Activated CD8-positive, alpha-beta T cell treated with anti-CD3 and anti-CD28 coated beads for 36 hours (primary cell): ENCODE measurements at regions of chr19 and their contacts with region 1.

Region 1: GRCh38 chr19:17739121-17739875 is 12.0 kb upstream of the FCHO1 start:
- DNase-seq: no peak
- ATAC-seq: no peak
- H3K4me3 Mint-ChIP-seq: no peak overlapping the region
- H3K27ac Mint-ChIP-seq: no peak overlapping the region
- H3K4me1 Mint-ChIP-seq: peaks cover 10% of the 10 kb centered on the region
- H3K27me3 Mint-ChIP-seq: no peaks in the 10 kb centered on the region
- CTCF ChIP-seq: no peak

Region 2: DNA sequence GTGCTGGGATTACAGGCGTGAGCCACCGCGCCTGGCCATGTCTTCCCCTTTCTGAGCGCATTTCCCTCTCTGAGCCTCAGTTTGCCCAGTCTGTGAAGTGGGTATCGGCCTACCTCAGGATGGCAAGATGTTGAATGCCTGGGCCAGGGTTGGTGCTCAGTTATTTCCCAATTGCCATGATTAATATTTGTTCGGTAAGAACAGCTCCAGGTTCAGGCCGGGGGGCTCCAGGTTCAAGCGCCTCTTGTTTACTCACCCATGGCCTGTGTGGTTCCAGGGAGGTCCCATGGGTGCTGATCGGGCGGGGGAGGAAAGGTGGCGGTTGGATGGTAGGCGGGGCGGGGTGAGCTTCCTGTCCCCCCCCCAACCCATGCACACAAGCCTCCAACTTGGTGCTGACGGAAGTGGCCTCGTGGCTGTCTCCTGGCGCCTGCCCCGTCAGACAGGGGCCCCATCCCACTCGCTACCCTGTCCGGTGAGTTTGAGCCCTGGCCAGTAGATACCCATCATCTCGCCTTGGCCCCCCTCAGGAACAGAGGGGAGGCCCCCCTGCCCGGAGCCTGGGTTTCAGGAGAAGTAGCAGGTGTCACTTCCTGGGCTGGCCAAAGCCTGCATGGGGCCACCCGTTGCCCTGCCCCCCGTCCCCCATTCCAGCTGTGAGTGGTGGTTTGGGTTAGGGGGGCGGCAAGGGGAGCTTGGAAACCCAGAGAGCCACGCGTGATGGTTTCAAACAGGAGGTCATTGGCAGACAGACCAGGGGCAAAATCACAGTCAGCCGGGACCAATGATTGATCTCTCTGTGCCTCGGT is 12.0 kb after region 1 on chr19 and contains the start of gene FCHO1:
- CTCF ChIA-PET with region 1: interaction called, 4 read pairs
- POLR2A ChIA-PET with region 1: interaction called, 32 read pairs
- intact Hi-C with region 1: no loop called
- DNase-seq: peak; percentile 95
- ATAC-seq: peak; percentile 68
- H3K4me3 Mint-ChIP-seq: peak within 1 kb of the TSS; percentile 80
- H3K27ac Mint-ChIP-seq: peak within 1 kb of the TSS; percentile 92
- H3K4me1 Mint-ChIP-seq: peaks cover 58% of the 10 kb centered on the region
- H3K27me3 Mint-ChIP-seq: no peaks in the 10 kb centered on the region
- CTCF ChIP-seq: no peak
- total RNA-seq, gene FCHO1: 36.9 to 38.3 TPM